Activated naive CD4-positive, alpha-beta T cell treated with anti-CD3 and anti-CD28 coated beads for 36 hours (primary cell): ENCODE measurements at regions of chr9 and their contacts with region 1.

Region 1: GRCh38 chr9:124254261-124254682 is 3.5 kb upstream of the NEK6 start:
- DNase-seq: peak; percentile 65
- H3K4me3 Mint-ChIP-seq: no peak overlapping the region
- H3K27ac Mint-ChIP-seq: no peak overlapping the region
- H3K4me1 Mint-ChIP-seq: peaks cover 25% of the 10 kb centered on the region
- H3K27me3 Mint-ChIP-seq: peaks cover 27% of the 10 kb centered on the region

Region 2: GRCh38 chr9:124126571-124127289 is 127.5 kb before region 1 on chr9:
- CTCF ChIA-PET with region 1: interaction called, 5 read pairs
- intact Hi-C with region 1: loop called (anchors 1 kb)
- DNase-seq: peak; percentile 85
- H3K4me3 Mint-ChIP-seq: no peak overlapping the region
- H3K27ac Mint-ChIP-seq: no peak overlapping the region
- H3K4me1 Mint-ChIP-seq: no peaks in the 10 kb centered on the region
- H3K27me3 Mint-ChIP-seq: peaks cover 4% of the 10 kb centered on the region

Region 3: GRCh38 chr9:124202447-124202971 is 51.8 kb before region 1 on chr9:
- CTCF ChIA-PET with region 1: no interaction called
- intact Hi-C with region 1: loop called (anchors 1 kb)
- DNase-seq: peak; percentile 94
- H3K4me3 Mint-ChIP-seq: peak overlapping the region; percentile 25
- H3K27ac Mint-ChIP-seq: peak overlapping the region; percentile 84
- H3K4me1 Mint-ChIP-seq: peaks cover 32% of the 10 kb centered on the region
- H3K27me3 Mint-ChIP-seq: no peaks in the 10 kb centered on the region

Region 4: DNA sequence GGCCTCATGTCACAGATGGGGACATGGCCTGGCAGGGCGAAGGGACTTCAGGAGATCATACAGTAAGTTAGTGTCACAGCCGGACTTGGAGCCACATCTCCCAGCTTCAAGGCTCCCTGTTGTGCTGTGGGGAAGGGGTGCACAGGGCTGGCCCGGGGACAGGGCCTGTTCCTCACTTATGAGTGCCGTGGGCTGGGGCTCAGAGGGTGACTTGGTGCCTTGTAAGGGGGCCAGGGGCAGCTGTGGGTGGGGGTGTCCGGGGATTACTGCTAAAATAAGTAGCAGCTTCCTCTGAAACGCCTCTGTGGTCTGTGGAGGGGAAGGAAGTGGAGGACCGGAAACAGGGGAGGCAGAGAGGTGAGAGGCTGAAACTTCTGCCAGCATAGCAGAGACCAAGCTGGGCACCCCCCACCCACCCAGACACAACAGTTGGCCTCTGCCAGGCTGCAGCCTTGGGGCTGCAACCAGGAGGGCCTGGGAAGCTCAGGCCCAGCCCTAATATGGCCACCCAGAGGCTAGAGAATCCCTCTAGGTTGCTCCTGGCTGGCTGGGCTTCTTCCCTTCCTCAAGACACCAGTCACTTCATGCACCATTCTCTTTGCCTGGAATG is 37.6 kb before region 1 on chr9:
- CTCF ChIA-PET with region 1: no interaction called
- intact Hi-C with region 1: loop called (anchors 2 kb)
- DNase-seq: peak; percentile 80
- H3K4me3 Mint-ChIP-seq: no peak overlapping the region
- H3K27ac Mint-ChIP-seq: peak overlapping the region; percentile 51
- H3K4me1 Mint-ChIP-seq: peaks cover 34% of the 10 kb centered on the region
- H3K27me3 Mint-ChIP-seq: no peaks in the 10 kb centered on the region

Region 5: GRCh38 chr9:124285903-124286291 is 31.6 kb after region 1 on chr9:
- CTCF ChIA-PET with region 1: no interaction called
- intact Hi-C with region 1: loop called (anchors 1 kb)
- DNase-seq: peak; percentile 50
- H3K4me3 Mint-ChIP-seq: no peak overlapping the region
- H3K27ac Mint-ChIP-seq: no peak overlapping the region
- H3K4me1 Mint-ChIP-seq: peaks cover 13% of the 10 kb centered on the region
- H3K27me3 Mint-ChIP-seq: no peaks in the 10 kb centered on the region